ENCODE measurements at regions of chr3 and their contacts with region 1.

Region 1: DNA sequence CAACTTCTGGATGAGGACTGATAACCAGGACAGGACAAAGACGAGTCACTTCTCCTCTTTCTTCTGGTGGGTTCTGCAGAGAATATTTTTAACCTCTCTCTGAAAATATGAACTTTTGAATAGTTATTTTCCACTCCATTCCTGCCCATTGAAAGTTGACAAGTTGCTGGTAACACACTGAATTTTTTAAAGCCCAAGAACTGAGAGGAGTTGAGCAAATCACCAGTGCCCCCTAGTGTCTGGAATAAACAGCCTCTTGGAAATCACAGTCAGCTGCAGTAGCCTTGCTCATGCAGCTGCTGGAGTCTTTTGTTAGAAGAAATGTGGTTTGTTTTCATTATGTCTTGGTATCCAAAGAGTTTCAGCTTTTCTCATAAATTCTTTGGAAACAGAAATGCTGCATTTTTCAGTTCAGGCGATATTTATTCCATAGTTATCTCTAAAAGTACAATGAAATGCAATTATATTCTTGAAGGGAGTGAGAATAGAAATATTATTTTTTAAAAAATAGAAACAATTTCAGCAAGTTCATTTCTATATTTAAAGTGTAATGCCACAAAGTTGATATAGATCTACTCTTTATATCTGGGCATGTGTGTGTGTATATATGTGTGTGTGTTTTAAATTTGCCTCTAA is 741.0 kb upstream of the CBLB start:
- DNase-seq: peak; percentile 21 to 55
- ATAC-seq: peak; percentile 85 to 92
- H3K4me3 ChIP-seq: peak overlapping the region in 1 of 4 donors; percentile 9
- H3K27ac ChIP-seq: no peak overlapping the region
- H3K4me1 ChIP-seq: no peaks in the 10 kb centered on the region
- H3K27me3 ChIP-seq: no peaks in the 10 kb centered on the region
- CTCF ChIP-seq: peak; percentile 68 to 89 (median 77)
- POLR2A ChIP-seq: no peak

Region 2: GRCh38 chr3:105906836-105907235 is 702.9 kb before region 1 on chr3:
- in situ Hi-C with region 1: loop called in 1 of 4 experiments (anchors 25 kb)
- intact Hi-C with region 1: no loop called
- DNase-seq: peak; percentile 45 to 67
- ATAC-seq: peak; percentile 93
- H3K4me3 ChIP-seq: no peak overlapping the region
- H3K27ac ChIP-seq: peak overlapping the region; percentile 52 to 65 (median 57)
- H3K4me1 ChIP-seq: peaks cover 24 to 29% of the 10 kb centered on the region in 2 donors
- H3K27me3 ChIP-seq: no peaks in the 10 kb centered on the region
- CTCF ChIP-seq: no peak
- POLR2A ChIP-seq: no peak

Region 3: DNA sequence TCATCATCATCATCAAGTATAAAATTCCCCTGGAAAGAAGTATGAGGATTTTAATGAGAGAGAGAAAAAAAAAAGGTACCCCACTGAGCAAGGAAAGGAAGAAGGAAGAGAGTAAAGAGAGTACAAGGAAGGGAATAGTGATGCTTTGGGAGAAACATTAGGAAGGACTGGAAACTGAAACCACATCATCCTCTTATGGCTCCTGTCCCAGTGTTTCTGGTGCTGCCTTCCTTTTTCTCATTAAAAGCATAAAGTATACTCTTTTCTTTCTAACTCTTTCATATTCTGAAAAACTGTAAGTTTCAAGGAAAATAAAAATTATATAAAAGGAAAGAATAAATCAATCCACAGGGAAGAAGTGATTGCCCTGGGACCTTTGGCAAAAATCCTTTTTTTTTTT is 124.6 kb before region 1 on chr3:
- in situ Hi-C with region 1: no loop called
- intact Hi-C with region 1: no loop called
- DNase-seq: no peak
- ATAC-seq: no peak
- H3K4me3 ChIP-seq: no peak overlapping the region
- H3K27ac ChIP-seq: no peak overlapping the region
- H3K4me1 ChIP-seq: no peaks in the 10 kb centered on the region
- H3K27me3 ChIP-seq: no peaks in the 10 kb centered on the region
- CTCF ChIP-seq: no peak
- POLR2A ChIP-seq: no peak

Measured in gastrocnemius medialis (tissue), 4 donors.